Activated CD4-positive, alpha-beta memory T cell treated with anti-CD3 and anti-CD28 coated beads, Interleukin-2, amount 10 ng/mL, durations not matched to agents 7 days and 5 days (primary cell): ENCODE measurements at regions of chr17 and their contacts with region 1.

Region 1: GRCh38 chr17:8057691-8058114 is 18.8 kb downstream of the ALOX15B start:
- DNase-seq: peak; percentile 54
- H3K4me3 Mint-ChIP-seq: no peak overlapping the region
- H3K27ac Mint-ChIP-seq: no peak overlapping the region
- H3K4me1 Mint-ChIP-seq: peaks cover 27% of the 10 kb centered on the region
- H3K27me3 Mint-ChIP-seq: peaks cover 58% of the 10 kb centered on the region

Region 2: GRCh38 chr17:7834962-7835813 is 222.5 kb before region 1 on chr17:
- CTCF ChIA-PET with region 1: interaction called, 10 read pairs
- POLR2A ChIA-PET with region 1: no interaction called
- DNase-seq: peak; percentile 89
- H3K4me3 Mint-ChIP-seq: peak overlapping the region; percentile 95
- H3K27ac Mint-ChIP-seq: peak overlapping the region; percentile 91
- H3K4me1 Mint-ChIP-seq: peaks cover 52% of the 10 kb centered on the region
- H3K27me3 Mint-ChIP-seq: peaks cover 20% of the 10 kb centered on the region

Region 3: GRCh38 chr17:8041249-8041928 is 16.3 kb before region 1 on chr17:
- CTCF ChIA-PET with region 1: interaction called, 20 read pairs
- POLR2A ChIA-PET with region 1: interaction called, 7 read pairs
- DNase-seq: peak; percentile 54
- H3K4me3 Mint-ChIP-seq: no peak overlapping the region
- H3K27ac Mint-ChIP-seq: no peak overlapping the region
- H3K4me1 Mint-ChIP-seq: no peaks in the 10 kb centered on the region
- H3K27me3 Mint-ChIP-seq: peaks cover 31% of the 10 kb centered on the region

Region 4: DNA sequence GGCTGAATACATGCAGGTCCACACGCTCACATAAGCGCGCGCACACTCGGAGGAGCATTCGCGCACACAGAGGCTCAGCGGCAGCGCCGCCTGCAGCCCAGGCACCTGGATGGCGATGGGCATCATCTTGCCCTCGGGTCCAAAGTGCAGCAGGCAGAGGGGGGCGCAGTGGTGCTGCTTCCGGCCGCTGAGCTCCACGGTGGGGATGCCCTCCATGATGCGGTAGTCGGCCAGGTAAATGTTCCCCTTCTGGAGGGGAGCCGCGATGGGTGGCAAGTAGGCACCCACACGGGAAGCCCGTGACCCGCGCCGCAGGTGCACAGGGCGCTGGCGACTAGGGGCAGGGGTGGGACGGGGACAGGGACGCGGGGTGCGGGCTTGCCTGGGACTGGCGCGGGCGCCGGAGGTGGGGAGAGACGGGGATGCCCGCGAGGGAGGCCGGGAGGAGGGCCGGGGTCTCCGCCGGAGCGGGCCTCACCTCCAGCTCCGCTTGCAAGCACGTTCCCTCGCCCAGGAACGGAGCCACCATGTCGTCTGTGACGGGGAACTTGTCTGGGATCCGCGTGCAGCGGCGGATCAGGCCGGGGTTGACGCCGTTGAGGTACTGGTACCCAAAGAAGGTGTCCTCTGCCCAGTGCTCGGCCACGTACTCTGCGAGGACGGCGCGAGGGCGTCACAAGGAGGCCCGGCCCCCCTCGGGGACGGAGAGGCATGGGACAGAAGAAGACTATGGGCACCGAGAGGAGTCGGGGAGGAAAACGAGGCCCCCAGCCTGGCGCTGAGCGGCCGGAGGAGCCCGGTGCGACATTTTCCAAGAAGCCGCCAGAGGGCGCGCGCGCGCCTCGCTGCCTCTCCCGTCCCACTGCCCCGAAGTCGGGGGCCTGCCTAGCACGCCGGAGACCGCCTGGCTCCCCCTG is 21.8 kb after region 1 on chr17:
- CTCF ChIA-PET with region 1: interaction called, 149 read pairs
- POLR2A ChIA-PET with region 1: interaction called, 3 read pairs
- DNase-seq: peak; percentile 80
- H3K4me3 Mint-ChIP-seq: peak overlapping the region; percentile 77
- H3K27ac Mint-ChIP-seq: peak overlapping the region; percentile 54
- H3K4me1 Mint-ChIP-seq: peaks cover 18% of the 10 kb centered on the region
- H3K27me3 Mint-ChIP-seq: peaks cover 18% of the 10 kb centered on the region

Region 5: GRCh38 chr17:8109661-8110464 is 52.2 kb after region 1 on chr17:
- CTCF ChIA-PET with region 1: interaction called, 64 read pairs
- POLR2A ChIA-PET with region 1: no interaction called
- DNase-seq: peak; percentile 80
- H3K4me3 Mint-ChIP-seq: peak overlapping the region; percentile 37
- H3K27ac Mint-ChIP-seq: no peak overlapping the region
- H3K4me1 Mint-ChIP-seq: peaks cover 16% of the 10 kb centered on the region
- H3K27me3 Mint-ChIP-seq: peaks cover 34% of the 10 kb centered on the region